Activated CD8-positive, alpha-beta memory T cell treated with anti-CD3 and anti-CD28 coated beads, Interleukin-2, amount 10 ng/mL, durations not matched to agents 7 days and 5 days (primary cell): ENCODE measurements at regions of chr14 and their contacts with region 1.

Region 1: GRCh38 chr14:22900081-22900799 is 17.2 kb downstream of the REM2 start:
- DNase-seq: peak; percentile 71
- ATAC-seq: peak; percentile 87
- H3K4me3 Mint-ChIP-seq: no peak overlapping the region
- H3K27ac Mint-ChIP-seq: peak overlapping the region; percentile 61
- H3K4me1 Mint-ChIP-seq: peaks cover 18% of the 10 kb centered on the region
- H3K27me3 Mint-ChIP-seq: no peaks in the 10 kb centered on the region

Region 2: DNA sequence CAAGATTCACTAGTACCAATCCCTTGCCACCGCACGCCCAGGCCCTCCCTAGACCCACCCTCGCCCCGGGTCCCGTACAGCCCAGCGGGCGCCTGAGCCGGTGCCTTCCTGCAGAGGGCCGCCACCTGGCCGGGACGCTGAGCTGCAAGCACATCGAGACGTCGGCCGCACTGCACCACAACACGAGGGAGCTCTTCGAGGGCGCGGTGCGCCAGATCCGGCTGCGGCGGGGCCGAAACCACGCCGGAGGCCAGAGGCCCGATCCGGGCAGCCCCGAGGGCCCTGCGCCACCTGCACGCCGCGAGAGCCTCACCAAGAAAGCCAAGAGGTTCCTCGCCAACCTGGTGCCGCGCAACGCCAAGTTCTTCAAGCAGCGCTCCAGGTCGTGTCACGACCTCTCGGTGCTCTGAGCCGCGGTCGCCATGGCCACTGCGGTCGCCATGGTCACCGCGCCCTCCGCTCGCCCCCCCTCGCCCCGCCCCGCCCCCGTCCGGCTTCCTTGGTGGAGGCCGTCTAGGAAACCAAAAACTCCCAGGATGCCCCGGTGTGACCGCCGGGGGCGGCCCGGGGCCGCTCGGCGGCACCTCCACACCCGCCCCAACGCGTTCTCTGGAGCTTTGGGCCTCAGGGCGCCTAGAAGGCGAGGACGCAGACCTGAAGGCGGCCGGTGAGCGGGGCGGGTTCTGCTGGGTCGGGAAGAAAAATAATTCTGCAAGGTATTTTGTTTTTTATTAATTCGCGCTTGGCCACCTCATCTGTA is 13.6 kb before region 1 on chr14:
- CTCF ChIA-PET with region 1: interaction called, 37 read pairs
- DNase-seq: peak; percentile 83
- ATAC-seq: peak; percentile 84
- H3K4me3 Mint-ChIP-seq: peak overlapping the region; percentile 77
- H3K27ac Mint-ChIP-seq: peak overlapping the region; percentile 80
- H3K4me1 Mint-ChIP-seq: peaks cover 36% of the 10 kb centered on the region
- H3K27me3 Mint-ChIP-seq: peaks cover 37% of the 10 kb centered on the region

Region 3: DNA sequence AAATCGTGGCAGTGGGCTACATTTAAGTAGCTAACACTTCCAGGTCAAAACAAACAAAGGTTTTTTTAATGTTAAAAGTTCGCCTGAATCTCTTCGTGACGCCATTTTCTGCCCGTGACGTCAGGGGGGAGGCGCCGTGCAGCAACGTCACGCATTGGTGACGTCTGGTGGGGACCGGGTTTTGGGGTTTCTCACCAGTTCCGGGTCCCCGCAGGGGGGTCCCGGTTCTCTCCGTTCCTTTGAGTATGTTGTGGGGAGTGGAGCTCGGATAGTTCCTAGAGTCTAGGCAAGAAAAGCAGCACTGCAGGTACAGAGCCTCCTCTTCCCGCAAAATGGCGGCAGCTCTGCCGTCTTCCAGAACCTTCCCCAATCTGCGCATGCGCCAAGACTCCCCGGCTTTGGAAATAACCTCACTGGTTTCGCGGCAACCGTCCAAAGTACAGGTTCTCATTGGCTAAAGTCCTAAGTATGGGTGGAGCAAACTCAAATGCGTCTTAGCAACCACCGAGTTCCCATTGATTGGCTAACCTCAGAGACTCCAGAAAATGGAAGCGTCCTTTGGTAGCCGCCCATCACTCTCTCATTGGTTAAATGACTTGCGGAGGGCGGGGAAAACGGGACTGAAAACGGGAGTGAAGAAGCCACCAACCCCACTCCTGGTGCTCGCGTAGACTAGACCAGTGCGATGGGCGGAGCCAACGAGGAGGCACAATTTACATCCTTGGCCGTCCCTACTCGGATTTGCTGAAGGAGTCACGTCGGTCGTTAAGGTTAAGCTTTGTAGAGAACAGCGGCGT is 18.8 kb after region 1 on chr14 and contains the start of gene RBM23:
- CTCF ChIA-PET with region 1: interaction called, 68 read pairs
- DNase-seq: peak; percentile 100
- ATAC-seq: peak; percentile 89
- H3K4me3 Mint-ChIP-seq: peak within 1 kb of the TSS; percentile 88
- H3K27ac Mint-ChIP-seq: peak within 1 kb of the TSS; percentile 99
- H3K4me1 Mint-ChIP-seq: peaks cover 22% of the 10 kb centered on the region
- H3K27me3 Mint-ChIP-seq: no peaks in the 10 kb centered on the region
- total RNA-seq, gene RBM23: 82.9 to 96.7 TPM

Region 4: DNA sequence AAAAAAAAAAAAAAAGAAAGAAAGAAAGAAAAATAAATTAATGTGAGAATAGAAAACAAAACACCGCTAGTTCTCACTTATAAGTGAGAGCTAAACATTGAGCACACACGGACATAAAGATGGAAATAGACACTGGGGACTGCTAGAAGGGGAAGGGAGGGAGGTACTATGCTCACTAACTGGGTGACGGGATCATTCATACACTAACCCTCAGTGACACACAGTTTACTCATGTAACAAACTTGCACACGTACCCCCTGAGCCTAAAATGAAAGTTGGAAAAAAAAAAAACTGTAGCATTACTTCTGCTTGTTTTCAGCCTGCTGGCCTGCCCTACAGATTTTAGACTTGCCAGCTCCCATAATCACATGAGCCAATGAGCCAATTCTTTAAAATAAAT is 39.4 kb after region 1 on chr14:
- CTCF ChIA-PET with region 1: no interaction called
- DNase-seq: no peak
- ATAC-seq: no peak
- H3K4me3 Mint-ChIP-seq: no peak overlapping the region
- H3K27ac Mint-ChIP-seq: no peak overlapping the region
- H3K4me1 Mint-ChIP-seq: no peaks in the 10 kb centered on the region
- H3K27me3 Mint-ChIP-seq: no peaks in the 10 kb centered on the region

Region 5: GRCh38 chr14:22962061-22962676 is 61.9 kb after region 1 on chr14:
- CTCF ChIA-PET with region 1: no interaction called
- DNase-seq: no peak
- ATAC-seq: no peak
- H3K4me3 Mint-ChIP-seq: no peak overlapping the region
- H3K27ac Mint-ChIP-seq: no peak overlapping the region
- H3K4me1 Mint-ChIP-seq: peaks cover 8% of the 10 kb centered on the region
- H3K27me3 Mint-ChIP-seq: peaks cover 11% of the 10 kb centered on the region